GM12878 (cell line): ENCODE measurements at regions of chr5 and their contacts with region 1.

Region 1: GRCh38 chr5:140174465-140175366 is at the start of gene CYSTM1:
- DNase-seq: peak; percentile 68
- ATAC-seq: peak; percentile 89
- H3K4me3 ChIP-seq: peak within 1 kb of the TSS; percentile 79
- H3K27ac ChIP-seq: peak within 1 kb of the TSS; percentile 72
- H3K4me1 ChIP-seq: peaks cover 4% of the 10 kb centered on the region; the same call in 1 of the 2 replicates
- H3K27me3 ChIP-seq: no peaks in the 10 kb centered on the region
- CTCF ChIP-seq: no peak
- EP300 ChIP-seq: peak in 1 of 2 experiments; percentile 50; a peak in 1 of 4 replicates
- POLR2A ChIP-seq: peak; percentile 94
- RAD21 ChIP-seq: no peak
- polyA plus RNA-seq, gene CYSTM1: 204 to 261 TPM

Region 2: GRCh38 chr5:140084541-140084940 is 90.2 kb before region 1 on chr5:
- CTCF ChIA-PET with region 1: no interaction called
- POLR2A ChIA-PET with region 1: no interaction called
- RAD21 ChIA-PET with region 1: no interaction called
- SMC1A ChIA-PET with region 1: no interaction called
- in situ Hi-C with region 1: no loop called
- intact Hi-C with region 1: no loop called
- DNase-seq: no peak
- ATAC-seq: peak; percentile 19; the same call in 1 of the 3 replicates
- H3K4me3 ChIP-seq: no peak overlapping the region
- H3K27ac ChIP-seq: no peak overlapping the region
- H3K4me1 ChIP-seq: no peaks in the 10 kb centered on the region
- H3K27me3 ChIP-seq: peaks cover 0 to 7% of the 10 kb centered on the region in 2 experiments
- CTCF ChIP-seq: no peak
- EP300 ChIP-seq: no peak
- POLR2A ChIP-seq: no peak
- RAD21 ChIP-seq: no peak

Region 3: DNA sequence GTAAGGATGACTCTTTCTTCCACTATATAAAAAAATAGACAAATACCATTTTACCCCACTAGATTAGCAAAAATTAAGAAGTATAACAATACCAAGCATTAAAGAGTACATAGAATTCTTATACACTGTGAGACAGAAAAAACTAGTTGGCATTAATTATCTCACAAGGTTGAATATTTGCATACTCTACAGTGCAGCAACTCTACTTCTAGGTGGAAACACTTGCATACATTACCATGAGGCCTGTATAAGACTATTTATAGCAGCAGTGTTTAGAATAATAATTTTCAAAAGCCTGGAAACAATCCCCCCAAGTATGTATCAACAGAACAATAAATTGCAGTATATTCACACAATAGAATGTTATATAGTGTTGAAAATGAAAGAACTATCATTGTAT is 79.8 kb before region 1 on chr5:
- CTCF ChIA-PET with region 1: no interaction called
- POLR2A ChIA-PET with region 1: no interaction called
- RAD21 ChIA-PET with region 1: no interaction called
- SMC1A ChIA-PET with region 1: no interaction called
- in situ Hi-C with region 1: no loop called
- intact Hi-C with region 1: no loop called
- DNase-seq: no peak
- ATAC-seq: peak; percentile 60
- H3K4me3 ChIP-seq: no peak overlapping the region
- H3K27ac ChIP-seq: no peak overlapping the region
- H3K4me1 ChIP-seq: no peaks in the 10 kb centered on the region
- H3K27me3 ChIP-seq: no peaks in the 10 kb centered on the region
- CTCF ChIP-seq: no peak
- EP300 ChIP-seq: no peak
- POLR2A ChIP-seq: no peak
- RAD21 ChIP-seq: no peak

Region 4: GRCh38 chr5:140107312-140108083 is 67.2 kb before region 1 on chr5:
- CTCF ChIA-PET with region 1: no interaction called
- POLR2A ChIA-PET with region 1: interaction called, 10 read pairs
- RAD21 ChIA-PET with region 1: no interaction called
- SMC1A ChIA-PET with region 1: interaction called, 6 read pairs
- in situ Hi-C with region 1: no loop called
- intact Hi-C with region 1: no loop called
- DNase-seq: peak; percentile 68
- ATAC-seq: peak; percentile 89
- H3K4me3 ChIP-seq: peak overlapping the region; percentile 86
- H3K27ac ChIP-seq: peak overlapping the region; percentile 67
- H3K4me1 ChIP-seq: peaks cover 20% of the 10 kb centered on the region
- H3K27me3 ChIP-seq: no peaks in the 10 kb centered on the region
- CTCF ChIP-seq: peak; percentile 6 to 29 (median 27); a peak in 3 of 6 replicates
- EP300 ChIP-seq: no peak
- POLR2A ChIP-seq: peak; percentile 86
- RAD21 ChIP-seq: no peak

Region 5: DNA sequence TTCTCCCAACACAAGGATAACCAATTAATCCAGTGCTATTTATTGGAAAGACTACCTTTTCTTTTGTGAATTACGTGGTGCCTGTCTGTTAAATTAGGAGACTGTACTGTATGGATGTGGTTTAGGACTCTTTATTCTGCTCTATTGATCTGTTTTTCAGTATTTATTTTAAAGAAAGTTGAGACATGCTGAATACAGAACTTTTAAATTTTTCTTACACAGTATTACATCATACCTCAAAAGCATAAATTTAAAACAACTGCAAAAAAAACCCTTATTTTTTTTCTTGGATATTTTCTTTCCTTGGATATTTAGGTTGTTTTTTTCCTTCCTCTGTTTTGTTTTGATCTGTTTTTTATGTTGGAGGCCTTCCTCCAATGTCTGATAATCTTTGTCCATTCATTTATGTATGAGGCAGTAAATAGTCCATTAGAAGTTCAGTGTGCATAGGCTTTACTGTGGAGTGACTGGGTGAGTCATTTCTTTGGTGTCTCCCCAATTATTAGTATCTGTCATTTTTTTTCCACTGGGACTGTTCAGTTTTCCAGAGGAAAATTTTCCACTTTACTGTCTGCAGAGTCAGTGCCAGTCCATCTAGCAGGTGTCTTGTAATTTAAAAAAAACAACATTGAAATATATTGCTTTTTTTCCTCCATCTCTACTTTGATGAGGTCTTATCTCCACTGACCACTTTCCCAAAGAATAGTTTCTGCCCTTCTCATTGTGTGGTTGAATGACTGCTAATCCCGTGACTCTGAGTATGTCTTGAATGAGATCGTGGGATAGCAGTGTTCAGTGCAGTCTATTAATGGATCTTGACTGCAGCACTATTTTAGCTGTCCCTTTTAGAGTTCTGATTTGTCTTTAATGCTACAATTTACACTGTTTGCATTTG is 15.5 kb after region 1 on chr5:
- CTCF ChIA-PET with region 1: interaction called, 3 read pairs
- POLR2A ChIA-PET with region 1: interaction called, 10 read pairs
- RAD21 ChIA-PET with region 1: no interaction called
- SMC1A ChIA-PET with region 1: interaction called, 7 read pairs
- in situ Hi-C with region 1: no loop called
- intact Hi-C with region 1: no loop called
- DNase-seq: no peak
- ATAC-seq: no peak
- H3K4me3 ChIP-seq: no peak overlapping the region
- H3K27ac ChIP-seq: no peak overlapping the region
- H3K4me1 ChIP-seq: no peaks in the 10 kb centered on the region
- H3K27me3 ChIP-seq: no peaks in the 10 kb centered on the region
- CTCF ChIP-seq: no peak
- EP300 ChIP-seq: no peak
- POLR2A ChIP-seq: no peak
- RAD21 ChIP-seq: no peak

Region 6: DNA sequence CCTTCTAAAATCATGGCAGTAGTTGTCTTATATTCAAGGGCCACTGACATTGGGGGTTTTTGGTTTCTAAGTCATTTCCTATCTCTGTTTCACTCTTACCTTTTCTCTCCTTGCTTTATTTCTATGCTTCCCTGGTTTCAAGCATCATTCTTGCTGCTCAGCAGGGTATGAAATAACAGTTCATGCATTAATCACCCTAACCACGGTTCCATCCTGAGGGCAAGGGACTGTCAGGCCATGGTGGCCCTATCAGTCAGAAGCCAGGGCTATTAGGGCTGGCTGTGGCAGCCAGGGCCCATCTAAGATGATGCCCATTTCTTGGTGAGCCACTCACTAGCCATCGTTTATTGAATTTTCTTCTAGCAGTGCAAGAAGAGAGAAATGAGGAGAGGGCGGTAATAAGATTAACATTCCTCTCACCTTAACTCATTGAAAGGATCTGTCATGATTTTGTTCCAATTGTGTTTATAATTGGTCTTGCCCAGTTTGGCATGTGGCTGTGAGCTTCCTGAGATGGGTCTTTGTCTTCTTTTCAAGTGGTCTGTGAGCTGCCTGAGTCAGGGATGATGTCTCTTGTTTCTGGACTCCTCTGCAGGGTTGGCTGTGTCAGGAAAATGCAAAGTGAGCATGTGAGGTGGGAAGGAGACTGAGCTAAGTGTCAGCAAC is 45.4 kb after region 1 on chr5:
- CTCF ChIA-PET with region 1: interaction called, 12 read pairs
- POLR2A ChIA-PET with region 1: interaction called, 7 read pairs
- RAD21 ChIA-PET with region 1: interaction called, 3 read pairs
- SMC1A ChIA-PET with region 1: interaction called, 13 read pairs
- in situ Hi-C with region 1: no loop called
- intact Hi-C with region 1: loop called (anchors 2 kb)
- DNase-seq: peak; percentile 54
- ATAC-seq: peak; percentile 91
- H3K4me3 ChIP-seq: no peak overlapping the region
- H3K27ac ChIP-seq: peak overlapping the region; percentile 38
- H3K4me1 ChIP-seq: peaks cover 30% of the 10 kb centered on the region
- H3K27me3 ChIP-seq: no peaks in the 10 kb centered on the region
- CTCF ChIP-seq: no peak
- EP300 ChIP-seq: no peak
- POLR2A ChIP-seq: no peak
- RAD21 ChIP-seq: no peak

Region 7: GRCh38 chr5:140357726-140358093 is 183.0 kb after region 1 on chr5:
- CTCF ChIA-PET with region 1: interaction called, 15 read pairs
- POLR2A ChIA-PET with region 1: no interaction called
- RAD21 ChIA-PET with region 1: interaction called, 3 read pairs
- SMC1A ChIA-PET with region 1: interaction called, 5 read pairs
- in situ Hi-C with region 1: no loop called
- intact Hi-C with region 1: loop called (anchors 5 kb)
- DNase-seq: no peak
- ATAC-seq: peak; percentile 98
- H3K4me3 ChIP-seq: no peak overlapping the region
- H3K27ac ChIP-seq: no peak overlapping the region
- H3K4me1 ChIP-seq: peaks cover 11% of the 10 kb centered on the region
- H3K27me3 ChIP-seq: no peaks in the 10 kb centered on the region
- CTCF ChIP-seq: peak; percentile 92 to 97 (median 96)
- EP300 ChIP-seq: no peak
- POLR2A ChIP-seq: no peak
- RAD21 ChIP-seq: peak; percentile 85